Activated T-helper 2 cell treated with anti-CD3 and anti-CD28 coated beads, Interferon-gamma antibody, Interleukin-2, Interleukin-4, amounts not matched to agents 10 μg/mL and 5 μg/mL and 100 μg/mL, durations not matched to agents 14 hours and 24 hours and 36 hours (primary cell): ENCODE measurements at regions of chr6 and their contacts with region 1.

Region 1: GRCh38 chr6:112043032-112044007 is 10.6 kb upstream of the CCN6 start:
- DNase-seq: peak; percentile 85
- H3K4me3 Mint-ChIP-seq: peak overlapping the region; percentile 91
- H3K27ac Mint-ChIP-seq: peak overlapping the region; percentile 98
- H3K4me1 Mint-ChIP-seq: peaks cover 32% of the 10 kb centered on the region
- H3K27me3 Mint-ChIP-seq: no peaks in the 10 kb centered on the region

Region 2: GRCh38 chr6:110815217-110816109 is 1227.9 kb before region 1 on chr6 and contains the start of gene CDK19:
- intact Hi-C with region 1: loop called (anchors 5 kb)
- DNase-seq: peak; percentile 98
- H3K4me3 Mint-ChIP-seq: peak within 1 kb of the TSS; percentile 100
- H3K27ac Mint-ChIP-seq: peak within 1 kb of the TSS; percentile 100
- H3K4me1 Mint-ChIP-seq: peaks cover 46% of the 10 kb centered on the region
- H3K27me3 Mint-ChIP-seq: no peaks in the 10 kb centered on the region
- total RNA-seq, gene CDK19: 19.0 and 22.6 TPM in 2 replicates

Region 3: GRCh38 chr6:111605100-111605751 is 438.1 kb before region 1 on chr6:
- intact Hi-C with region 1: loop called (anchors 1 kb)
- DNase-seq: peak; percentile 15
- H3K4me3 Mint-ChIP-seq: peak overlapping the region; percentile 90
- H3K27ac Mint-ChIP-seq: peak overlapping the region; percentile 98
- H3K4me1 Mint-ChIP-seq: peaks cover 49% of the 10 kb centered on the region
- H3K27me3 Mint-ChIP-seq: no peaks in the 10 kb centered on the region

Region 4: DNA sequence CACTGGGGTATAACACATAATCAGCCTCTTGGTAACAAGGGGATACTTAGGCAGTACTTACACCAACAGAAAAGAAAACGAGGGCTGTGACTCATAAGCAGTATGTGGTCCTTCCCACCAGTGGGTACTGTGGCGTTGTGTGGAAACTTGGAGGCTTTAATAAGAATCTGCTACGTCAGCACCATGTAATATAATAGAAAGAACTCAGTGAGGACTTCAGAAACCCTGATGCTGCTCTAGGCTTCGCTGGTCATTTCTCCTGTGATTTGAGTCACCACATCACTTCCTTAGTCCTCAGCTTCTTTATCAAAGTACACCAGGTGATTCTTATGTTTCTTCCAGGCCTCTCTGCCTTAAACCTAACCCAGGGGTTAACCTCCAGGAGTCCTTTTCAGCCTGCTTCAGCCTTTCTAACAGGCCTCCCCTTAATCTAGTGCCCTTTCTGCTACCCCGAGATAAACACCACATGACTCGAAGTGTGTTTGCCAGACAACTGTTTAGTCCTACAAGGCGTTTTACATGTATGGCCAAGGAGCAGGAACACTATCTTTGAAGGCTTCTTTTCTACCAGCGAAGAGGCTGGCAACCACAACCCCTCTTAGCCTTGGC is 238.6 kb before region 1 on chr6:
- intact Hi-C with region 1: loop called (anchors 1 kb)
- DNase-seq: peak; percentile 59
- H3K4me3 Mint-ChIP-seq: peak overlapping the region; percentile 26
- H3K27ac Mint-ChIP-seq: peak overlapping the region; percentile 96
- H3K4me1 Mint-ChIP-seq: peaks cover 76% of the 10 kb centered on the region
- H3K27me3 Mint-ChIP-seq: no peaks in the 10 kb centered on the region

Region 5: GRCh38 chr6:111957623-111958315 is 85.6 kb before region 1 on chr6:
- intact Hi-C with region 1: no loop called
- DNase-seq: no peak
- H3K4me3 Mint-ChIP-seq: no peak overlapping the region
- H3K27ac Mint-ChIP-seq: no peak overlapping the region
- H3K4me1 Mint-ChIP-seq: peaks cover 4% of the 10 kb centered on the region
- H3K27me3 Mint-ChIP-seq: peaks cover 10% of the 10 kb centered on the region

Region 6: GRCh38 chr6:111973118-111973761 is 70.1 kb before region 1 on chr6:
- intact Hi-C with region 1: loop called (anchors 1 kb)
- DNase-seq: peak; percentile 24
- H3K4me3 Mint-ChIP-seq: peak overlapping the region; percentile 24
- H3K27ac Mint-ChIP-seq: peak overlapping the region; percentile 70
- H3K4me1 Mint-ChIP-seq: peaks cover 53% of the 10 kb centered on the region
- H3K27me3 Mint-ChIP-seq: peaks cover 13% of the 10 kb centered on the region

Region 7: GRCh38 chr6:112018619-112019416 is 24.5 kb before region 1 on chr6:
- intact Hi-C with region 1: loop called (anchors 1 kb)
- DNase-seq: no peak
- H3K4me3 Mint-ChIP-seq: no peak overlapping the region
- H3K27ac Mint-ChIP-seq: no peak overlapping the region
- H3K4me1 Mint-ChIP-seq: peaks cover 68% of the 10 kb centered on the region
- H3K27me3 Mint-ChIP-seq: no peaks in the 10 kb centered on the region

Region 8: DNA sequence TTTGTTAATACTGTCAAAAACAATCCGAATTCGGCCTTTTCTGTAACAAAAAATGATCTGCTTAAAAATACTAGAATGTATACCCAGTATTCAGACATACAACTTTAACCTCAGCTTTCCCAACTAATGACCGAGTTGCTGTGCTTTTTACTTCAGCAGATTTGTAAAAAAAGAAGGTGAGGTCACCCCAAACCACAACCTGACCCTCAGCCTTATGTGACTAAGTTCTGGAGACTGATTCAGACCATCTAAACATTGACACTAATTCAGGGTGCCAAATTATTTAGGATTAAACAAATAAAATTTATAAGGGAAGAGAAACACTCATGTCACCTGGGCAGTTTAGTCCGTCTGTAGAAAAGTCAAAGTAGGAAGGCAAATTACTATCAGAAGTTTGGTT is 18.3 kb after region 1 on chr6:
- intact Hi-C with region 1: no loop called
- DNase-seq: no peak
- H3K4me3 Mint-ChIP-seq: no peak overlapping the region
- H3K27ac Mint-ChIP-seq: no peak overlapping the region
- H3K4me1 Mint-ChIP-seq: no peaks in the 10 kb centered on the region
- H3K27me3 Mint-ChIP-seq: peaks cover 6% of the 10 kb centered on the region

Region 9: GRCh38 chr6:112163295-112164257 is 120.3 kb after region 1 on chr6:
- intact Hi-C with region 1: loop called (anchors 2 kb)
- DNase-seq: peak; percentile 61
- H3K4me3 Mint-ChIP-seq: peak overlapping the region; percentile 45
- H3K27ac Mint-ChIP-seq: no peak overlapping the region
- H3K4me1 Mint-ChIP-seq: peaks cover 16% of the 10 kb centered on the region
- H3K27me3 Mint-ChIP-seq: peaks cover 55% of the 10 kb centered on the region